Common myeloid progenitor, CD34-positive (primary cell): ENCODE measurements at regions of chr20 and their contacts with region 1.

Region 1: DNA sequence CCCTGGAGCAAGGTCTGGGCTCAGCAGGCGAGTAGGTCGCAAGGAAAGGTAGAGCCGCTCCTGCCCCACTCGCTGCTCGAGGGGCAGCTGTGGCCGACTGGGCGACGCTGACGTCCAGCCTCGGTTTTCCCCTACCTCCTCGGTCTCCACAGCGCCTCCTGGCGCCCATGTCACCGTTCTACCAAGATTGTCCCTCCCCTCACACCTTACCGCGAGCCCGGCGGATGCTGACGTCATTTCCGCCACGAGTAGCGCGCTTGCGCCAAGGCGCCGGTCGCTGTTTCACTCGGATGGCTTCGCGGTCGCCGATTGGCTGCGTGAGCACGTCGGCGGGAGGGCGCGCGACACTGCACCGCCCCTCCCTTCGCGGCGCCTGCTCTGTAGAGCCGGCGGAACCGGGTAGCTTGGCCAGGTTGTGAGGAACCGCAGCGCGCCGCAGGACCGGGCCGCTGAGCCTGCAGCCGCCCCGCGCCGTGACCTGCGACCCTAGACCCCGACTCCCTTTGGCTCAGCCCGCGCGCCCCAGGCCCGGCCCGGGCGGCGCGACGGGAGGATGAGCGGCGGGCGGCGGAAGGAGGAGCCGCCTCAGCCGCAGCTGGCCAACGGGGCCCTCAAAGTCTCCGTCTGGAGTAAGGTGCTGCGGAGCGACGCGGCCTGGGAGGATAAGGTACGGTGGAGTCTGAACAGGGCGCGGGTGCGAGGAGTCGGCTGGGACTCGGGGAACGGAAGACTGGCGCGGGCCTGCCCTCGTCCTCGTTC is at the start of gene RAB5IF:
- DNase-seq: peak; percentile 99 to 100 (median 99)
- H3K4me3 ChIP-seq: peak within 1 kb of the TSS; percentile 81 to 99 (median 96)
- H3K27ac ChIP-seq: peak within 1 kb of the TSS; percentile 82 to 92
- H3K4me1 ChIP-seq: peaks cover 8 to 38% (median 26%) of the 10 kb centered on the region in 4 experiments
- H3K27me3 ChIP-seq: no peaks in the 10 kb centered on the region

Region 2: GRCh38 chr20:36447101-36447500 is 158.5 kb before region 1 on chr20:
- CTCF ChIA-PET with region 1: no interaction called
- POLR2A ChIA-PET with region 1: no interaction called
- DNase-seq: no peak
- H3K4me3 ChIP-seq: no peak overlapping the region
- H3K27ac ChIP-seq: no peak overlapping the region
- H3K4me1 ChIP-seq: no peaks in the 10 kb centered on the region
- H3K27me3 ChIP-seq: peaks cover 0 to 1% (median 0%) of the 10 kb centered on the region in 5 experiments

Region 3: DNA sequence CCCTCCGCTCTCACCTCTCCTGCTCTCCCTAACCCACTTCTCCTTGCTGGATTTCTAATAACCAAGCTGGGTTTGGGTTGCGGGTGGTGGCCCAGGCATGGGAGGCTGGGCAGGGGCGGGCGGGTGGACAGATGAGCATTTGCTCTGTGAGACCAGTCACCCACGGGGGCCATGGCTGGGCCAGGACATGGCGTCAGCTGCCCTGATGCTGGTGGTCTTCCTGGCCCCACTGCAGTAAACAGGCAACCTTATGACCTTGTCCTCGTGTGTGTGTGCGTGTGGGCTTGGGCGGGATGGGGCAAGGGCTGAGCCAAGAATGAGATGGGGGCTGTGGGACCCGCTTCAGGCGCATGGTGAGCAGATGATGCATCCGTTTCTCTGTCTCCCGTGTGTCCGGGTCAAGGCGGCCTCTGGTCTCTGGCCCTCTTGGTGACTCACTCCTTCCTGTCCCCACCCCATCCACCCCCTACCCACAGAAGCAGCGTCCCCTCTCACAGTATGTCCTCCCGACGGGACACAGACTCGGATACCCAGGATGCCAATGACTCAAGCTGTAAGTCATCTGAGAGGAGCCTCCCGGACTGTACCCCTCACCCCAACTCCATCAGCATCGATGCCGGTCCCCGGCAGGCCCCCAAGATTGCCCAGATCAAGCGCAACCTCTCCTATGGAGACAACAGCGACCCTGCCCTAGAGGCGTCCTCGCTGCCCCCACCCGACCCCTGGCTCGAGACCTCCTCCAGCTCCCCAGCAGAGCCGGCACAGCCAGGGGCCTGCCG is 105.7 kb before region 1 on chr20:
- CTCF ChIA-PET with region 1: no interaction called
- POLR2A ChIA-PET with region 1: no interaction called
- DNase-seq: no peak
- H3K4me3 ChIP-seq: no peak overlapping the region
- H3K27ac ChIP-seq: no peak overlapping the region
- H3K4me1 ChIP-seq: no peaks in the 10 kb centered on the region
- H3K27me3 ChIP-seq: no peaks in the 10 kb centered on the region

Region 4: DNA sequence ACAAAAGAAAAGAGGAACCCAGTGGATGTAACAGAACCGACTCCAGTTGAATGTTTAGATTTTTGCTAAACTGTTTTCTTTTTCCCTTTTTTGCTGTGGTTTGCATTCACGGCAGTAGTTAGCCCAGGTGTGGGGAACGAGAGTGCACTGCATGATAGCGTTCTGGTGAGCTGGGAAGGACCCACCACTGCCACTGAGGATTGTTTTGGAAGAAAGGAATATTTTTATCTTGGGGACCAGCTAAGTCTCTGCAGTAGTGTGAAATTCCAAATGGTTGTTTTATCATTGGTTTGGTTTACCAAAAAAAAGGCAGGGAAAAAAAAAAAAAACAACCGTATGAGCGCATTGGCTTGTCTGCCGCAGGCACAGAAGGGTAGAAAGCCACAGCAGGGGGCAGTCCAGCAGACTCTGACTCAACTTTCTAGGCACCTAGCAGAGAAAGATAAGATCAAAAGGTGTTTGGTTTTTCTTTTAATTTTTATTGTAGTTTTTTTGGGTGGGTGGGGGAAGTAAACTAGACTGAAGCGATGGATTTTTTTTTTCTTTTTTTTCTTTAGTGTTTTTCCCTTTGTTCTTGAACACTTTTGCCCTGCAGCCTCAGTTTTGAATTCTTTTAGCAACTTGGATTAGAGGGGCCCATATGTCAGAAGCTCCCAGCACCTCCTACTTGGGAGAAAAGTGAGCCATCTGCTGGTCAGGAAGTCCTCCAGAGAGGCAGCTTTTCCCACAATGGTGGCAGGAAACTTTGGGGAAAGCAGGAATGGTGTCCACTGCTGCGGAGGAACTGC is 13.5 kb before region 1 on chr20:
- CTCF ChIA-PET with region 1: interaction called, 33 read pairs
- POLR2A ChIA-PET with region 1: interaction called, 13 read pairs
- DNase-seq: peak in 1 of 3 donors; percentile 34
- H3K4me3 ChIP-seq: no peak overlapping the region
- H3K27ac ChIP-seq: peak overlapping the region in 1 of 2 experiments; percentile 43
- H3K4me1 ChIP-seq: peaks cover 4 to 13% (median 7%) of the 10 kb centered on the region in 4 experiments
- H3K27me3 ChIP-seq: no peaks in the 10 kb centered on the region